ENCODE measurements at regions of chr14 and their contacts with region 1.

Region 1: GRCh38 chr14:89701211-89702043 is 253.1 kb downstream of the EFCAB11 start:
- DNase-seq: peak; percentile 49 to 92
- H3K4me3 ChIP-seq: peak overlapping the region; percentile 55 to 76
- H3K27ac ChIP-seq: peak overlapping the region; percentile 61 to 71
- H3K4me1 ChIP-seq: peaks cover 0 to 12% of the 10 kb centered on the region in 2 donors
- H3K27me3 ChIP-seq: no peaks in the 10 kb centered on the region
- CTCF ChIP-seq: no peak

Region 2: DNA sequence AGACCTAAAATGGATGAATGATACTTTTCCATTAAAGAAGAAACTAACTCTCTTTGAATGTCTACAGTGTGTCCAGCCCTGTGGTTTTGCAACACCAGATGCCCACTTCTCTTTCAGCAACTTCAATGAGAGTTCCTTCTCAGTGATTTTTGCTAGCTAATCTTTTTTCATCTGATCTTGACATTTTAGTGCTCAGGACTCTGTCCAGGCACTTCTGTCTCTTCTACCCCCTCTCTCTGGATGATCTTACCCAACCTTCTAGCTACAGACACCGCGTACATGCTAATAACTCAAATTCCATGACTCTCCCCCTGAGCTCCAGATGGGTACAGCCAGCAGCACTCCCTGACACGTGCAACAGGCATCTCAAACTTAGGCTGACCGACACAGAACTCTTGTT is 123.3 kb before region 1 on chr14:
- intact Hi-C with region 1: loop called (anchors 5 kb)
- DNase-seq: no peak
- H3K4me3 ChIP-seq: peak overlapping the region in 1 of 2 donors; percentile 4
- H3K27ac ChIP-seq: peak overlapping the region; percentile 80 to 85
- H3K4me1 ChIP-seq: peaks cover 24 to 33% of the 10 kb centered on the region in 2 donors
- H3K27me3 ChIP-seq: no peaks in the 10 kb centered on the region
- CTCF ChIP-seq: no peak

Region 3: GRCh38 chr14:89618811-89619551 is 82.4 kb before region 1 on chr14:
- intact Hi-C with region 1: loop called (anchors 2 kb)
- DNase-seq: peak in 1 of 2 donors; percentile 83
- H3K4me3 ChIP-seq: peak overlapping the region; percentile 87 to 97
- H3K27ac ChIP-seq: peak overlapping the region; percentile 74 to 85
- H3K4me1 ChIP-seq: peaks cover 0 to 14% of the 10 kb centered on the region in 2 donors
- H3K27me3 ChIP-seq: no peaks in the 10 kb centered on the region
- CTCF ChIP-seq: no peak